PC-3 (cell line): ENCODE measurements at regions of chr6 and their contacts with region 1.

Region 1: DNA sequence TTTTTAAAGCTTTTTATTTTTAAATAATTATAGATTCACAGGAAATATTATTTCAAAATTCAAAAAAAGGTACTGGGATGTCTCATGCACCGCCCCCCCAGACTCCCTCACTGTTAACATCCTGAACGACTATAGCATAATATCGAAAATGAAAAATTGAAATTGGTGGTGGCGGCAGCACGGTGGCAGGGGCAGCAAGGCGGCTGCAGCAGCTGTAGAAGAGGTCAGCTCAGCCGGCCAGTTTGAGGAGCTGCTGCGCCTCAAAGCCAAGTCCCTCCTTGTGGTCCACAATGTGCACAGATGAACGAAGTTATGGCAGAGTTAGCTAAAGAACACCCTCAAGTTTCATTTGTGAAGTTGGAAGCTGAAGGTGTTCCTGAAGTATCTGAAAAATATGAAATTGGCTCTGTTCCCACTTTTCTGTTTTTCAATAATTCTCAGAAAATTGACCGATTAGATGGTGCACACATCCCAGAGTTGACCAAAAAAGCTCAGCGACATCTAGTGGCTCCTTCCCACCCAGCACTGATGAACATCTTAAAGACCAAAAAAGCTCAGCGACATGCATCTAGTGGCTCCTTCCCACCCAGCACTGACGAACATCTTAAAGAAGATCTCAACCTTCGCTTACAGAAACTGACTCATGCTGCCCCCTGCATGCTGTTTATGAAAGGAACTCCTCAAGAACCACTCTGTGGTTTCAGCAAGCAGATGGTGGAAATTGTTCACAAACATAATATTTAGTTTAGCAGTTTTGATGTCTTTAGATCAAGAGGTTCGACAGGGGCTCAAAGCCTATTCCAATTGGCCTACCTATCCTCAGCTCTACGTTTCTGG is 100.8 kb downstream of the FAM217A start:
- DNase-seq: peak; percentile 84
- ATAC-seq: peak; percentile 99
- H3K4me3 ChIP-seq: no peak overlapping the region
- H3K27ac ChIP-seq: no peak overlapping the region
- H3K4me1 ChIP-seq: no peaks in the 10 kb centered on the region
- H3K27me3 ChIP-seq: no peaks in the 10 kb centered on the region
- CTCF ChIP-seq: peak; percentile 81

Region 2: GRCh38 chr6:2810092-2810671 is 1167.9 kb before region 1 on chr6:
- CTCF ChIA-PET with region 1: no interaction called
- POLR2A ChIA-PET with region 1: interaction called, 19 read pairs
- intact Hi-C with region 1: no loop called
- DNase-seq: peak; percentile 98
- ATAC-seq: peak; percentile 94
- H3K4me3 ChIP-seq: no peak overlapping the region
- H3K27ac ChIP-seq: peak overlapping the region; percentile 98
- H3K4me1 ChIP-seq: peaks cover 40% of the 10 kb centered on the region
- H3K27me3 ChIP-seq: no peaks in the 10 kb centered on the region
- CTCF ChIP-seq: no peak

Region 3: DNA sequence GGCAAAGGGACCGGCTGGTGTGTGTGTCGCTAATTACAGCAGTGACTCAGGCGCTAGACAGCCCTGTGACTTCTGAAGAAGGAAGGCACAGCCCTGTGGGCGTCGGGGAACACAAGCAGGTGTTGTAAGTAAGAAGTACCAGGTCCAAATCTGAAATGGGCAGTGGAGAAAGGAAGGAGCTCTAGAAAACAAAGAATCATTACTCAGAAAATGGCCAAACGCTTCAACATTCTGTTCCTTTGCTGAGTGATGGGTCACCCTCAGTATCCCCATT is 333.4 kb before region 1 on chr6:
- CTCF ChIA-PET with region 1: no interaction called
- POLR2A ChIA-PET with region 1: no interaction called
- intact Hi-C with region 1: no loop called
- DNase-seq: no peak
- ATAC-seq: no peak
- H3K4me3 ChIP-seq: no peak overlapping the region
- H3K27ac ChIP-seq: no peak overlapping the region
- H3K4me1 ChIP-seq: no peaks in the 10 kb centered on the region
- H3K27me3 ChIP-seq: no peaks in the 10 kb centered on the region
- CTCF ChIP-seq: no peak

Region 4: GRCh38 chr6:3742426-3743344 is 235.4 kb before region 1 on chr6:
- CTCF ChIA-PET with region 1: no interaction called
- POLR2A ChIA-PET with region 1: no interaction called
- intact Hi-C with region 1: loop called (anchors 5 kb)
- DNase-seq: peak; percentile 91
- ATAC-seq: peak; percentile 83
- H3K4me3 ChIP-seq: peak overlapping the region; percentile 58
- H3K27ac ChIP-seq: no peak overlapping the region
- H3K4me1 ChIP-seq: peaks cover 27% of the 10 kb centered on the region
- H3K27me3 ChIP-seq: no peaks in the 10 kb centered on the region
- CTCF ChIP-seq: peak; percentile 98

Region 5: DNA sequence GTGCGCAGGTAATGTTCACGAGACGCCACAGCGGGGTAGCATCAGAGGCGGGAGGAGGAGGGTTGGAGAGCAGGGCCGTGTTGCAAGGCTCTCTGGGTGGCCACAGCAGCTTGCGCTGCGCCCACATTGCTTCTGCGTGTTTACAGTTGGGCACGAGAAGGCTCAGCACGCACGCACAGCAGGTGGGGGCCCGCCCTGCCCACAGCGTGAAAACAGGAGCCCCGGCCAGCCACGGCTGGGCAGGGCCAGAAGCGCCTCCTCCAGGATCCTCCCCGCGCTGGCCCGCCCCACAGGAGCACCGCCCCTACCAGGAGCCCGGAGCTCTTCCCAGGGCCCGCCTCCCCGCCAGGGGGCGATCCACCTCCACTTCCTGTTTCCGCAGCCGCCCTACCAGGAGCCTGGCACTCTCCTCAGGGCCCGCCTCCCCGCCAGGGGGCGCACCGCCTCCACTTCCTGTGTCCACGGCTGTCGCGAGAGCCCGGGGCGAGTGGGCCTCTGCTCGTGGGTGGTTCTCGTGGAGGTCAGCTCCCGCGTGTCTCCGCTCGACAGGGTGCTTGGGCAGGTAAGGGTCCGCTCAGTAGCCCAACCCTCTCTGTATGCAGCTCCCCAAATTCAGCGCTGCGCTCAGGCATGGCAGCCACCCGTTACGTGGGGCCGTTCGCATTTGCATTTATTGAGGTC is 129.0 kb before region 1 on chr6 and contains the start of gene FAM50B:
- CTCF ChIA-PET with region 1: interaction called, 18 read pairs
- POLR2A ChIA-PET with region 1: no interaction called
- intact Hi-C with region 1: loop called (anchors 1 kb)
- DNase-seq: peak; percentile 92
- ATAC-seq: peak; percentile 95
- H3K4me3 ChIP-seq: peak within 1 kb of the TSS; percentile 61
- H3K27ac ChIP-seq: no peak within 1 kb of the TSS
- H3K4me1 ChIP-seq: peaks cover 20% of the 10 kb centered on the region
- H3K27me3 ChIP-seq: no peaks in the 10 kb centered on the region
- CTCF ChIP-seq: peak; percentile 97
- total RNA-seq, gene FAM50B: 8.3 and 10.2 TPM in 2 replicates

Region 6: GRCh38 chr6:3887150-3887700 is 90.9 kb before region 1 on chr6:
- CTCF ChIA-PET with region 1: no interaction called
- POLR2A ChIA-PET with region 1: no interaction called
- intact Hi-C with region 1: loop called (anchors 1 kb)
- DNase-seq: peak; percentile 36
- ATAC-seq: no peak
- H3K4me3 ChIP-seq: no peak overlapping the region
- H3K27ac ChIP-seq: peak overlapping the region; percentile 89
- H3K4me1 ChIP-seq: peaks cover 46% of the 10 kb centered on the region
- H3K27me3 ChIP-seq: no peaks in the 10 kb centered on the region
- CTCF ChIP-seq: peak; percentile 48

Region 7: DNA sequence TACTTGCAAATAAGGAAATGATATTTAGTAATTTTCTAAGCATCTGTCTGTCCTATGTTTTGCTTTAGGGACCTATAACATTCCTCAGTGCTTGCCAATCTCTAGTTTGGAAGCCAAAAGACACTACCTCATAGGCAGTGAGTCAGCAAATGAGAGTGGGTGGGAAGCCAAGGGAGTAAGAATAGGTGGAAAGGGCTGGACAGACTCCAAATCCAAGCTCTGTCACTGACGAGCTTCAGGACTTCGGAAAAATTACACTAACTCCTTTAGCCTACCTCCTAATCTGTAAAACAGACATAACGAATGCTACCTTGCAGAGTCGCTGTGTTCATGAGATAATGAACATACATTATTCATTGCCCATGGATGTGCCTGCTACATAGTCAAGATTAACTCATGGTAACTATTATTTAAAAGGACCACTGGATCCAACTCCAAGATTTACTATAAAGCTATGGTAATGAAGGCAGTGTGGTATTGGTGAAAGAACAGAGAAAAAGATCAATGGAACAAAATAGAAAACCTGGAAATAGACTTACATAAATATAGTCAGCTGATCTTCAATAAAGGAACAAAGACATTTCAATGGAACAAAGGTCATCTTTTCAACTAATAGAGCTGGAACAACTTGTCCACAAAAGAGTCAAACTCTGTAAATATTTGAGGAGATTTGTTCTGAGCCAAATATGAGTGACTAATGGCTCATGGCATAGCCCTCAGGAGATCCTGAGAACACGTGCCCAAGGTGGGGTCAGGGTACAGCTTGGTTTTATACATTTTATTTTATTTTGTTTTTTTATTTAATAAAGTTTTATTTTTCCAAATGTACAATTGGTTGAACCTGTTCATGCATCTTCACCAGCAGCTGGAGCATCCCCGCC is 64.8 kb before region 1 on chr6:
- CTCF ChIA-PET with region 1: no interaction called
- POLR2A ChIA-PET with region 1: no interaction called
- intact Hi-C with region 1: loop called (anchors 1 kb)
- DNase-seq: peak; percentile 99
- ATAC-seq: peak; percentile 73
- H3K4me3 ChIP-seq: peak overlapping the region; percentile 65
- H3K27ac ChIP-seq: peak overlapping the region; percentile 95
- H3K4me1 ChIP-seq: peaks cover 44% of the 10 kb centered on the region
- H3K27me3 ChIP-seq: no peaks in the 10 kb centered on the region
- CTCF ChIP-seq: no peak

Region 8: GRCh38 chr6:3929281-3929798 is 48.8 kb before region 1 on chr6:
- CTCF ChIA-PET with region 1: interaction called, 9 read pairs
- POLR2A ChIA-PET with region 1: no interaction called
- intact Hi-C with region 1: loop called (anchors 1 kb)
- DNase-seq: no peak
- ATAC-seq: no peak
- H3K4me3 ChIP-seq: no peak overlapping the region
- H3K27ac ChIP-seq: no peak overlapping the region
- H3K4me1 ChIP-seq: peaks cover 5% of the 10 kb centered on the region; the same call in 1 of the 2 replicates
- H3K27me3 ChIP-seq: no peaks in the 10 kb centered on the region
- CTCF ChIP-seq: no peak

Region 9: GRCh38 chr6:3997177-3997770 is 19.2 kb after region 1 on chr6:
- CTCF ChIA-PET with region 1: no interaction called
- POLR2A ChIA-PET with region 1: no interaction called
- intact Hi-C with region 1: no loop called
- DNase-seq: no peak
- ATAC-seq: no peak
- H3K4me3 ChIP-seq: no peak overlapping the region
- H3K27ac ChIP-seq: no peak overlapping the region
- H3K4me1 ChIP-seq: no peaks in the 10 kb centered on the region
- H3K27me3 ChIP-seq: no peaks in the 10 kb centered on the region
- CTCF ChIP-seq: no peak